ENCODE measurements at regions of chr2 and their contacts with region 1.

Region 1: GRCh38 chr2:155223781-155224406 is 525.4 kb downstream of the KCNJ3 start:
- DNase-seq: no peak
- ATAC-seq: no peak

Region 2: GRCh38 chr2:154439156-154439555 is 784.7 kb before region 1 on chr2:
- intact Hi-C with region 1: loop called in 1 of 2 experiments (anchors 2 kb)
- DNase-seq: no peak
- ATAC-seq: no peak

Region 3: DNA sequence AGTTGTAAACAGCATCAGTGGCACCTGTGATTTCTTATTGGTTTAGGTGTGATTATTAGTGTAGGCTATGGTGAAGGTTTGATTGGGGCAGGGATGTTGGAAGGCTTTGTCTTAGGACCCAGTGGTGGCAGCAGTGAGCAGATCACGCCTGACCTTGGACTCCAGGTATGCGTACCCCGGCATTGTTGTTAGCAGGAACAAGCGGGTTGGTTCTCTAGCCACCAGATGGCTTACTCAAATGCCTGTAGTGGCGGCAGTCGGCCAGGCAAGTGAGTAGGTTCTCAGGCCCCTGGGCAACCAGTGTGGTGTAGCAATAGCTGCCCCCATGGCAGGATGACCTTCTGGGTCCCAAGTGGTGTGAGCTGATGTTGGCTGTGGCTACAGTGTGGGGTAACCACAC is 32.9 kb after region 1 on chr2:
- intact Hi-C with region 1: no loop called
- DNase-seq: no peak
- ATAC-seq: no peak

Measured in left cardiac atrium (tissue), 4 donors.